PC-9 (cell line): ENCODE measurements at regions of chr1 and their contacts with region 1.

Region 1: GRCh38 chr1:77060000-77060399 is 159.2 kb downstream of the PIGK start:
- DNase-seq: peak; percentile 67 to 73
- H3K4me3 ChIP-seq: no peak overlapping the region
- H3K27ac ChIP-seq: no peak overlapping the region
- H3K4me1 ChIP-seq: no peaks in the 10 kb centered on the region
- H3K27me3 ChIP-seq: no peaks in the 10 kb centered on the region
- CTCF ChIP-seq: no peak

Region 2: DNA sequence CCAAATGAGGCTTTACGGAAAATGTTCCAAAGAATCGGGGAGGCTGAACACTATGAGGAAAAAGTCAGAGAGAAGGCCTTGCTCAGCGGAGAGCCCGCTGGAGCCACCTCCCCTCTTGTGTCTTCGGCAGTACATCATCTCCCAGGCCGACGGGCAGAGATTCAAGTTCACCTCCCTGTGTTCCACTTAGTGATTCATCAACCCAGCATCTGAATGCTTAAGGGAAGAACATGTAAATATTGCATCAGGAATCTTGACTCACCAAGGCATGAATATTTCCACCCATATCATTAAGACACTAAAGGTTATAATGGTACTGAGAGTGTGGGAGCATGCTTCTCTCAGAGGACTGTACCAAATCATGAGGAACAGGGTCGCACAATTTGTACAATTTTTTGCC is 20.3 kb before region 1 on chr1:
- CTCF ChIA-PET with region 1: no interaction called
- POLR2A ChIA-PET with region 1: no interaction called
- intact Hi-C with region 1: loop called (anchors 1 kb)
- DNase-seq: peak; percentile 67 to 97
- H3K4me3 ChIP-seq: no peak overlapping the region
- H3K27ac ChIP-seq: peak overlapping the region; percentile 80
- H3K4me1 ChIP-seq: peaks cover 17% of the 10 kb centered on the region
- H3K27me3 ChIP-seq: no peaks in the 10 kb centered on the region
- CTCF ChIP-seq: no peak

Region 3: DNA sequence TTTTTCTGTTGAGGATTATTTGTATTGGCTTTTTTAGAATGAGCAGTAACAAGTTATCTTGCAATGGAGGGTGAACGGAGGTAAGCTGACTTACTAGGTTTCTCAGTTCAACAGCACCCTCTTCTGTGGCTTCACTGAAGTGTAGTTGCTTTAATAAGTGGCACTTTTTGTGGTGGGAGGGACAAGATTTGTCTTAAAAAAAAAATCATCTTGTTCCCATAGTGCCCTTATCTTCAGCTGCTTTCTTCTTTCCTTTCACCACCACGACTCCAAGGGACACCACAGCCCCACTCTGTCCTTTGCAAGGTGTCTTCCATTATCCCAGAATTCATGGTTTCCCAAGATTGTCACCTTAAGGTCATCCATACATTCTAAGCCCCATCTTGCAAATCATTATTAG is 66.3 kb after region 1 on chr1:
- CTCF ChIA-PET with region 1: no interaction called
- POLR2A ChIA-PET with region 1: no interaction called
- intact Hi-C with region 1: no loop called
- DNase-seq: peak; percentile 28 to 68
- H3K4me3 ChIP-seq: no peak overlapping the region
- H3K27ac ChIP-seq: no peak overlapping the region
- H3K4me1 ChIP-seq: no peaks in the 10 kb centered on the region
- H3K27me3 ChIP-seq: no peaks in the 10 kb centered on the region
- CTCF ChIP-seq: peak; percentile 89